ENCODE measurements at regions of chr2 and their contacts with region 1.

Region 1: DNA sequence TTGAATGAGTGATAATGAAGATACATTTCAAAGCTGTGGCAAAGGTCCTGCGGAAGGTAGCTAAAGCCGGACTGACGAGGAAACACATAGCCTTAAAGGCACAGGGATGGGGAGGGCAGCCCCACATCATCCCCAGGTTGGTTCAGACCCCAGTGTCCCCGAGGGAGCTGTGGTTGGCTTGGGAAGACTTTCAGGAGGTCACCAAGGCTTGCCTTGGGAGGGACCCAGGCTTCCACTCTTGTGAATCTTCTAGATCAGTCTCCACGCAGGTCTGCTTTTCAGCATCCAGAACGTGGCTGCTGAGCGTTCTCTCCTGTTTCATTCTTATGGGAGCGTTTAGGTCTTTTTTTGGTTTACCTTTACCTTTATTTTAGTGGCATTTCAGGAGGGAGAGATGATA is 16.8 kb downstream of the KIF1A start:
- DNase-seq: no peak
- ATAC-seq: no peak
- H3K4me3 ChIP-seq: no peak overlapping the region
- H3K27ac ChIP-seq: no peak overlapping the region
- H3K4me1 ChIP-seq: no peaks in the 10 kb centered on the region
- H3K27me3 ChIP-seq: peaks cover 6 to 62% of the 10 kb centered on the region in 2 experiments; a peak in 4 of 5 replicates
- CTCF ChIP-seq: no peak
- EP300 ChIP-seq: no peak
- POLR2A ChIP-seq: no peak
- RAD21 ChIP-seq: no peak

Region 2: DNA sequence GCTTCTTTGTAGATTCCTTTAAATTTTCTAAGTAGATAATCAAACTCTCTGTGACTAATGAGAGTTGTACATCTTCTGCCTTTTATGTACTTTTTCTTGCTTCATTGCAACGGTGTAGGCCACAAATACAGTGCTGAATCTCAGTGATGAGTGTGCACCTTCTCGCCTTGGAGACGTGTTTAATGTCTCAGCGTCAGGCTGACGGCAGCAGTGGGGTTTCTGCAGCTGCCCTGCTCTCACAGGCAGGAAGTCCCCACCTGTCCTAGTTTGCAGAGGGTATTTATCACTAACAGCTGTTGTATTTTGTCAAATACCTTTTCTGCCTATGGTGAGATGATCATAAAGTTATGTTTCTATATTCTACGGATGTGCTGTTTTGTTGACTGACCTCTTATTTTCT is 78.7 kb after region 1 on chr2:
- CTCF ChIA-PET with region 1: no interaction called
- POLR2A ChIA-PET with region 1: no interaction called
- in situ Hi-C with region 1: no loop called
- intact Hi-C with region 1: loop called (anchors 2 kb)
- DNase-seq: no peak
- ATAC-seq: no peak
- H3K4me3 ChIP-seq: no peak overlapping the region
- H3K27ac ChIP-seq: no peak overlapping the region
- H3K4me1 ChIP-seq: peaks cover 24% of the 10 kb centered on the region
- H3K27me3 ChIP-seq: no peaks in the 10 kb centered on the region
- CTCF ChIP-seq: no peak
- EP300 ChIP-seq: no peak
- POLR2A ChIP-seq: no peak
- RAD21 ChIP-seq: no peak

Region 3: DNA sequence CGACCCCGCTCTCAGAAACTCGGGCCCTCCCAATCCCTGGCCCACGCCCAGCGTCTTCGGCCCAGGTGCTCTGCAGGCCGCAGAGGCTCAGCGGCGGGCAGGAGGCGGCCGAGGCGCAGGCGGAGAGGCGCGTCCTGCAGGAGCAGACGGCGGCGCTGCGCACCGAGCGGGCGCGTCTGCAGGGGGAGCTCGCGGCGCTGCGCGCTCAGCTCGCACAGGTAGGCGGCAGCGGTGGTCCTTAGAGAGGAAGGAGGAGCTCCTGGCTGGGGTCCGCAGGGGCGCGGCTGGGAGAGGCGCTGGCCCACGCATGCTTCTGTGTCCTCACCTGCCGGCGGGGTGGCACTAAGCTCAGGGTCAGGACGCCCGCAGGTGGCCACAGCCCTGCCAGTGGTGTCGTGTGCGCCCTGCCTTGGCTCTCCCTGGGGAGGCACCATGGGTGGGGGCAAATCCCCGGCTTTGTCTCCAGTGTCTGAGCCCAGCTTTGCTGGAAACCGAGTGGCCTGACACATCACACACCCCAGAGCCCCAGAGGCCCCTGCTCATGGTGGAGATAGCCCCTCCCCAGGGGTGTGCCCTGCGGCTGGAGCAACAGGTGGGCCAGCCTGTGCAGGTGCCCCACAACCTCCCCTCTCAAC is 180.3 kb after region 1 on chr2:
- CTCF ChIA-PET with region 1: no interaction called
- POLR2A ChIA-PET with region 1: no interaction called
- in situ Hi-C with region 1: no loop called
- intact Hi-C with region 1: no loop called
- DNase-seq: no peak
- ATAC-seq: no peak
- H3K4me3 ChIP-seq: no peak overlapping the region
- H3K27ac ChIP-seq: no peak overlapping the region
- H3K4me1 ChIP-seq: peaks cover 34% of the 10 kb centered on the region
- H3K27me3 ChIP-seq: peaks cover 8 to 32% of the 10 kb centered on the region in 2 experiments; a peak in 3 of 5 replicates
- CTCF ChIP-seq: no peak
- EP300 ChIP-seq: no peak
- POLR2A ChIP-seq: no peak
- RAD21 ChIP-seq: no peak

Region 4: DNA sequence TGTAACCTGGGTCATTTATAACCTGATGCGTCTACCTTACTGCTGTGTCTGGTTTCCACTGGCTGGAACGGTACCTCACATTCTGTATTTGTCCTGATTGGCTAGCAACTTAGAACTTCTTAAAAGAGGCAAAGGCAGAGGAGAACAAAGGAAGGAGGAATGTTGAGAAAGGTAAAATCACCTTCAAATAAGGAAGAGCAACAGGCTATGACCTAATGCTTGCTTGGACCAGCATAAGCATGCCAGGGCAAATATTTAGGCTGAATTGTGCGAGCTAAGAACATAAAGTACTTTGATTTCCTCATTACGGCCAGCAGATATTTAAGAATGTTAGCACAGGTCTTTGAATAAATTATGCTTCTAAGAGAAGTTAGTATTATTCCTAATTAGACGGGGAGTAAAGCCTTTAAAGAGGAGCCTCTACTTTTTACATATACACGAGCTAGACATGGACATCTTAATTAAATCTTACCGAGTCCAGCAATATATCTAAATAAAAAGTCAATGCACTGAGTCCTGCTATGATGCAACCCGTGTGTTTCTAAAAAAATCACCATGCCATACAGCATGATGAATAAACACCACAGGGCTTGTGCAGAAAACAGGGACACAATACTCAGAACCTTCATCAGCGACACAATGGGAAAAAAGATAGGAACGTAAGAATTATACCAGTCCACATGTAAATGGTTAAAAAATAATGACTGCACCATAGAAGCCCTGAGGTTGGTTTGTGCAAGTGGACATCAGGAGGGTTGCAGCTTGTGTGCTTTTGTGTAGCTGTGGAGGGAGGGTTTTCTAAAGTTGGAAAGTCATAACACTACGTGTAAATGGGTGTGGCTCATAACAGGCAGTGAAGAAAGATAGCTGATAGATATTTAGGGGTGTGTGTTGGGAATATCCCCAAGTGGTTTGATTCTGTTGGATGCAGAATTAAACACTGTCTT is 526.8 kb after region 1 on chr2:
- CTCF ChIA-PET with region 1: no interaction called
- POLR2A ChIA-PET with region 1: no interaction called
- in situ Hi-C with region 1: no loop called
- intact Hi-C with region 1: no loop called
- DNase-seq: no peak
- ATAC-seq: no peak
- H3K4me3 ChIP-seq: no peak overlapping the region
- H3K27ac ChIP-seq: no peak overlapping the region
- H3K4me1 ChIP-seq: no peaks in the 10 kb centered on the region
- H3K27me3 ChIP-seq: no peaks in the 10 kb centered on the region
- CTCF ChIP-seq: no peak
- EP300 ChIP-seq: no peak
- POLR2A ChIP-seq: no peak; a peak in 1 of 4 replicates
- RAD21 ChIP-seq: no peak

Measured in HepG2 (cell line).